ENCODE measurements at regions of chr19 and their contacts with region 1.

Region 1: DNA sequence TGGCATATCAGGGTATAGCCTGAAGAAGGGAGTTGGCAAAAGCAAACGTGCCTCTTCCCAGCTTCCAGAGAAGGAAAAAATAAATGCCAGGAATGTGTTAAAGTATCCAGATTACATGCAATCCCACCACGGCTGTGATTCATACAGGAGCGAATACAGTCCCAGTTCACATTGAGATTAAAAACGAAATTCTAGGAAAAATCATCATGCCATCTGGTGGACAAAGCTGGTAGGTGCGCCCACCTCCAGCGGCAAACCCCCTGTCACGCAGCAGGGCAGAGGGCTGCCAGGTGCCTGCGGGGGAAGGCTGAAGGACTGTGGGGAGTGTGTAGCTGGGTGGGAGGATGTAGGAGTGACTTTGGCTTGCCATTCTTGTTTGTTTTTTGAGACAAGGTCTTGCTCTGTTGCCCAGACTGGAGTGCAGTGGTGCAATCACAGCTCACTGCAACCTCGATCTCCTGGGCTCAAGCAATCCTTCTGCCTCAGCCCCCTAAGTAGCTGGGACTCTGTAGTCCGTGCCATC is 6.4 kb upstream of the DMWD start:
- DNase-seq: peak; percentile 91
- H3K4me3 ChIP-seq: no peak overlapping the region
- H3K27ac ChIP-seq: peak overlapping the region in 1 of 2 experiments; percentile 25; a peak in 1 of 4 replicates
- H3K4me1 ChIP-seq: peaks cover 2 to 3% of the 10 kb centered on the region in 2 experiments; a peak in 2 of 4 replicates
- H3K27me3 ChIP-seq: no peaks in the 10 kb centered on the region
- CTCF ChIP-seq: peak; percentile 87
- EP300 ChIP-seq: no peak
- RAD21 ChIP-seq: peak; percentile 71

Region 2: DNA sequence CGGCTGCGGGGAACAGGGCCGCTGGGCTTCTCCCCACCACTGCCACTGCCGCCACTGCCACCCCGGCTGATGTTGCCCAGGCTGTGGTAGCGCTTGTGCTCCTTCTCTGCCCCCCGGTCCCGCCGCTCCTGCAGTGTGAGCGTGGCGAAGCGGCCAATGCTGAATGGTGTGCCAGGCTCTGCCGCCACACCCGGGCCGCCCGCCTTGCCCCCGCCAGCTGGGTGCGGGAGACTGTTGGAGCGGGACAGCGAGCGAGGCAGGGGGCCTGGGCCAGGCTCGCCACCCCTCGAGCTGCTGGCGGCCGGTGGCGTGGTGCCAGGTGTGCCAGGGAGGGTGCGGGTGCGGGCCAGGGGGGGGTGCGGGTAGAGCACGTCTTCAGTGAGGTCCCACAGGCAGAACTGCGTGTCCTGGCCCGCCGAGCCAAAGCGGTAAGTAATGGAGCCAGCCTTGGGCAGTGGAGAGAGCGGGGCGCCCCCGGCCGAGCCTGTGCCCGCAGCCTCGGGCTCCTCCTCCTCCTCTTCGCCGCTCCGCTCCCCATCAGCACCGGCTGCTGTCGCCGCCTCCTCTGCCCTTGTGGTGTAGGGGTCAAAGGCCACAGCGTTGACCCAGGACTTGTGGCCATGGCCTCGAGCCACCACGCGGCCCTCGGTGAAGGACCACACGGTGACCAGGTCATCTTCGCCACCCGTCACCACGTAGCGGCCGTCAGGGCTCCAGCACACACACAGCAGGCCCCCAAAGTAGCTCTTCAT is 13.1 kb before region 1 on chr19:
- CTCF ChIA-PET with region 1: interaction called, 12 read pairs
- POLR2A ChIA-PET with region 1: no interaction called
- DNase-seq: no peak
- H3K4me3 ChIP-seq: no peak overlapping the region
- H3K27ac ChIP-seq: peak overlapping the region in 1 of 2 experiments; percentile 99; a peak in 1 of 4 replicates
- H3K4me1 ChIP-seq: peaks cover 22 to 32% of the 10 kb centered on the region in 2 experiments; a peak in 3 of 4 replicates
- H3K27me3 ChIP-seq: no peaks in the 10 kb centered on the region
- CTCF ChIP-seq: no peak
- EP300 ChIP-seq: no peak
- RAD21 ChIP-seq: no peak

Region 3: GRCh38 chr19:45809643-45810159 is 10.6 kb after region 1 on chr19:
- CTCF ChIA-PET with region 1: interaction called, 37 read pairs
- POLR2A ChIA-PET with region 1: no interaction called
- DNase-seq: no peak
- H3K4me3 ChIP-seq: peak overlapping the region in 1 of 2 experiments; percentile 4; a peak in 1 of 4 replicates
- H3K27ac ChIP-seq: peak overlapping the region in 1 of 2 experiments; percentile 67; a peak in 2 of 4 replicates
- H3K4me1 ChIP-seq: peaks cover 0 to 10% of the 10 kb centered on the region in 2 experiments; a peak in 3 of 4 replicates
- H3K27me3 ChIP-seq: no peaks in the 10 kb centered on the region
- CTCF ChIP-seq: no peak
- EP300 ChIP-seq: no peak
- RAD21 ChIP-seq: no peak

Region 4: GRCh38 chr19:46040952-46041500 is 242.0 kb after region 1 on chr19 and contains the start of gene IGFL4:
- CTCF ChIA-PET with region 1: no interaction called
- POLR2A ChIA-PET with region 1: no interaction called
- DNase-seq: no peak
- H3K4me3 ChIP-seq: no peak within 1 kb of the TSS
- H3K27ac ChIP-seq: no peak within 1 kb of the TSS
- H3K4me1 ChIP-seq: no peaks in the 10 kb centered on the region; a peak in 1 of 4 replicates
- H3K27me3 ChIP-seq: peaks cover 66% of the 10 kb centered on the region; the same call in 1 of the 2 replicates
- CTCF ChIP-seq: no peak
- EP300 ChIP-seq: no peak
- RAD21 ChIP-seq: no peak
- polyA plus RNA-seq, gene IGFL4: not detected in 2 replicates